ENCODE measurements at regions of chr3 and their contacts with region 1.

Region 1: GRCh38 chr3:112582244-112582874 is 20.5 kb downstream of the SLC35A5 start:
- DNase-seq: no peak
- ATAC-seq: peak in 1 of 4 donors; percentile 54
- H3K4me3 ChIP-seq: no peak overlapping the region
- H3K27ac ChIP-seq: no peak overlapping the region
- H3K4me1 ChIP-seq: peaks cover 0 to 16% (median 2%) of the 10 kb centered on the region in 12 donors
- H3K27me3 ChIP-seq: no peaks in the 10 kb centered on the region
- CTCF ChIP-seq: peak; percentile 26 to 75 (median 56)
- POLR2A ChIP-seq: no peak

Region 2: DNA sequence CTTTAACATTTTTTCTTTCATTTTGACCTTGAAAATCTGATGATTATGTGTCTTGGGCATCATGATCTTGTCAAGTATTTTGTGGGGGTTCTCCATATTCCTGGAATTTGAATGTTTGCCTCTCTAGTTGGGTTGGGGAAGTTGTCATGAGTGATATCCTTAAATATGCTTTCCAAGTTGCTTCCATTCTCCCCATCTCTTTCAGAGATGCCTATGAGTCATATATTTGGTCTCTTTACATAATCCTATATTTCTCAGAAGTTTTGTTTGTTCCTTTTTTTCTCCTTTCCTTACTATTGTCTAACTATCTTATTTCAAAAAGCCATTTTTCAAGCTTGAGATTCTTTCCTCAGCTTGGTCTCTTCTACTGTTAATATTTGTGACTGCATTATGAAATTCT is 127.6 kb after region 1 on chr3:
- intact Hi-C with region 1: loop called in 1 of 10 experiments (anchors 10 kb)
- DNase-seq: no peak
- ATAC-seq: no peak
- H3K4me3 ChIP-seq: no peak overlapping the region
- H3K27ac ChIP-seq: no peak overlapping the region
- H3K4me1 ChIP-seq: no peaks in the 10 kb centered on the region
- H3K27me3 ChIP-seq: no peaks in the 10 kb centered on the region
- CTCF ChIP-seq: no peak
- POLR2A ChIP-seq: no peak

Region 3: DNA sequence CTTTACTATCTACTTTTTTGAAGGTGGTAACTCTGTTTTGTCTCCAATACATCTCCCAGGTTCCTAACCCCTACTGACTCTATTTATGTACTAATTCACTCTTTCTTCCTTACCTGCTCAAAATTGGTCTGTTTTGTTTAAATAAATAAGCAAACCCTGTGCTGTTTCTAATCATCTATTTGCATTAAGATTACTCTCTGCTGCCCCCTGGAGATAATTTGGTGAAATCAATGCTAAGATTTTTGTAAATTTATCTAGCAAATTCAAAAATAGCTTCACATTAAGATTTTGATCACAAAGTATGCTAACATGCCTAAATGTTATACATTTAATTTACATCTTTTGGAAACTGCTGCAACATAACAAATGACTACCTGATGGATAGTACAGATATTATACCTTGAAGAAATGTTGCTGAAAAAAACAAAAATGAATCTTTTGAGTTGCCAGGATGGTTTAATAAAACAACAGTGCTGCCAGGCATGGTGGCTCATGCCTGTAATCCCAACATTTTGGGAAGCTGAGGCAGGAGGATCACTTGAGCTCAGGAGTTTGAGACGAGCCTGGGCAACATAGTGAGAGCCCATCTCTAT is 397.0 kb after region 1 on chr3:
- intact Hi-C with region 1: loop called (anchors 2 to 10 kb)
- DNase-seq: no peak
- ATAC-seq: no peak
- H3K4me3 ChIP-seq: no peak overlapping the region
- H3K27ac ChIP-seq: no peak overlapping the region
- H3K4me1 ChIP-seq: peaks cover 0 to 28% (median 0%) of the 10 kb centered on the region in 12 donors
- H3K27me3 ChIP-seq: no peaks in the 10 kb centered on the region
- CTCF ChIP-seq: peak; percentile 66 to 82 (median 73)
- POLR2A ChIP-seq: no peak

Region 4: DNA sequence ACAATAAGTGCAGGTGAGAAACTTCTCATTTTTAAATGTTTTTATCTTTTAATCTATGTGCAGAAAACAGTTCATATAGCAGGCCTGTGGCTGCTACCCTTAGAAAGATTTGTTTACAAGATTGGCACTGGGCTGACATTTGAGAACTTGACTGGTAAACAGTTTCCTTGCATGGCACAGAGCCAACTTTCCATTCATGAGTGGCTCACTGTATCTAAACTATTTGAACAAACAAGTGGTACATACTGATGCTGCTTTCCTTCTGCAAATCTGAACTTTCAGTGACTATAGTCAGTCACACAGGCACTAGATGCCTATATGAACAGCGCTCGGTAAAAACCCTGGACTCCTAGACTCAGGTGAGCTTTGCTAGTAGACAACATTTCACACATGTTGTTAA is 402.1 kb after region 1 on chr3:
- intact Hi-C with region 1: loop called (anchors 2 to 10 kb)
- DNase-seq: no peak
- ATAC-seq: peak in 2 of 4 donors; percentile 28 to 47
- H3K4me3 ChIP-seq: no peak overlapping the region
- H3K27ac ChIP-seq: no peak overlapping the region
- H3K4me1 ChIP-seq: peaks cover 0 to 13% (median 2%) of the 10 kb centered on the region in 12 donors
- H3K27me3 ChIP-seq: no peaks in the 10 kb centered on the region
- CTCF ChIP-seq: no peak
- POLR2A ChIP-seq: no peak